ENCODE measurements at regions of chr15 and their contacts with region 1.

Region 1: GRCh38 chr15:70535071-70535954 is 228.0 kb downstream of the UACA start:
- DNase-seq: peak; percentile 83
- H3K4me3 Mint-ChIP-seq: peak overlapping the region; percentile 89
- H3K27ac Mint-ChIP-seq: peak overlapping the region; percentile 92
- H3K4me1 Mint-ChIP-seq: peaks cover 51% of the 10 kb centered on the region
- H3K27me3 Mint-ChIP-seq: no peaks in the 10 kb centered on the region

Region 2: GRCh38 chr15:70545526-70545925 is 10.2 kb after region 1 on chr15:
- CTCF ChIA-PET with region 1: interaction called, 8 read pairs
- intact Hi-C with region 1: loop called (anchors 1 kb)
- DNase-seq: no peak
- H3K4me3 Mint-ChIP-seq: no peak overlapping the region
- H3K27ac Mint-ChIP-seq: peak overlapping the region; percentile 91
- H3K4me1 Mint-ChIP-seq: peaks cover 60% of the 10 kb centered on the region
- H3K27me3 Mint-ChIP-seq: no peaks in the 10 kb centered on the region

Region 3: GRCh38 chr15:70559265-70560239 is 24.2 kb after region 1 on chr15:
- CTCF ChIA-PET with region 1: interaction called, 15 read pairs
- intact Hi-C with region 1: loop called (anchors 1 kb)
- DNase-seq: peak; percentile 92
- H3K4me3 Mint-ChIP-seq: no peak overlapping the region
- H3K27ac Mint-ChIP-seq: no peak overlapping the region
- H3K4me1 Mint-ChIP-seq: peaks cover 12% of the 10 kb centered on the region
- H3K27me3 Mint-ChIP-seq: no peaks in the 10 kb centered on the region

Region 4: DNA sequence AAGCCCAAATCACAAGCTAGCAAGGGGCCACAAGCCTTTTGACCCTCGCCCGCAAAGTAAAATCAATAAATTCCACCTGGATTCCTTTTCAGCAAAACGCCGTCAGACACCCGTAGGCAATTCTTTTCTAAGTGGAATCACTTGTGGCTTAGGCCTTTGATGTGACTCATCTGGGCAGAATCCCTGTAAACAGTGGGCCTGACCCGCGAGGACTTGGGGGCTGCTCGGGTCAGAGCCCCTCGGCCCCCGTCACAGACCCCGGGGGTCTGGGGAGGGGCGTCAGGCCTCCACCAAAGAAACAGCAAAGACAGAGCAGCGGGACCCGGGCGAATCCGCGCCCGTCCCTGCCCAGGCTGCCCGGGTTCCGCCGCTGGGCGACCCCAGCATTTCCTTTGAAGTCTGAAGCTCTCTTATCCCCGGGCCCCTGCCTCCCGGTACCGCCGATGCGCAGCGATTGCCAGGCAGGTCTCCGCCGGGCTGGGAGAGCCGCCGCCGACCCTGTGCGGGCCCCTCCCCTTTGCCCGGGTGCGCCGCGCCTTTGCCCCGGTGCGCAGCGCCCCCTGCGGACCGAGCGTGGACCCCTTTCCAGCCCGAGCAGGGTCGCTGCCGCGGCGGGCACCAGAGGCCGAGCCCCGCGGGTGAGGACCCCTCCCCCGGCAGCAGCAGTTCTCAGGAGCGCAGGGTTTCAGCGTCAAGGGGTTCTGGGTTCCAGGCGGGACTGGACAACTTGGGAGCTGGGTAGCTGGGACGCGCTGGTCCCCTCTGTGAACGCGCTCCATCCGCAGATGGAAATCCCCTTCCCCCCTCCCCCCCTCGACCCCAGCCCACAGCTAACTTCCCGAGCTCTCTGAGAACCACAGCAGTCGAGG is 49.8 kb after region 1 on chr15:
- CTCF ChIA-PET with region 1: interaction called, 12 read pairs
- intact Hi-C with region 1: no loop called
- DNase-seq: peak; percentile 60
- H3K4me3 Mint-ChIP-seq: peak overlapping the region; percentile 47
- H3K27ac Mint-ChIP-seq: no peak overlapping the region
- H3K4me1 Mint-ChIP-seq: peaks cover 10% of the 10 kb centered on the region
- H3K27me3 Mint-ChIP-seq: peaks cover 2% of the 10 kb centered on the region

Measured in activated naive CD4-positive, alpha-beta T cell treated with anti-CD3 and anti-CD28 coated beads for 36 hours (primary cell).